Aorta (tissue), 5 donors: ENCODE measurements at regions of chr4 and their contacts with region 1.

Region 1: GRCh38 chr4:112604589-112604988 is 32.1 kb downstream of the ZGRF1 start:
- DNase-seq: no peak
- ATAC-seq: peak; percentile 74
- H3K4me3 ChIP-seq: no peak overlapping the region
- H3K27ac ChIP-seq: no peak overlapping the region
- H3K4me1 ChIP-seq: no peaks in the 10 kb centered on the region
- H3K27me3 ChIP-seq: no peaks in the 10 kb centered on the region

Region 2: GRCh38 chr4:112099701-112100297 is 504.8 kb before region 1 on chr4:
- intact Hi-C with region 1: loop called in 1 of 2 experiments (anchors 5 kb)
- DNase-seq: no peak
- ATAC-seq: peak; percentile 79
- H3K4me3 ChIP-seq: no peak overlapping the region
- H3K27ac ChIP-seq: no peak overlapping the region
- H3K4me1 ChIP-seq: no peaks in the 10 kb centered on the region
- H3K27me3 ChIP-seq: no peaks in the 10 kb centered on the region

Region 3: GRCh38 chr4:112327965-112328733 is 276.4 kb before region 1 on chr4:
- intact Hi-C with region 1: loop called (anchors 5 kb)
- DNase-seq: no peak
- ATAC-seq: no peak
- H3K4me3 ChIP-seq: no peak overlapping the region
- H3K27ac ChIP-seq: no peak overlapping the region
- H3K4me1 ChIP-seq: no peaks in the 10 kb centered on the region
- H3K27me3 ChIP-seq: no peaks in the 10 kb centered on the region

Region 4: GRCh38 chr4:112648263-112649054 is 43.9 kb after region 1 on chr4:
- intact Hi-C with region 1: no loop called
- DNase-seq: no peak
- ATAC-seq: no peak
- H3K4me3 ChIP-seq: no peak overlapping the region
- H3K27ac ChIP-seq: no peak overlapping the region
- H3K4me1 ChIP-seq: no peaks in the 10 kb centered on the region
- H3K27me3 ChIP-seq: peaks cover 0 to 2% of the 10 kb centered on the region in 2 donors